ENCODE measurements at regions of chr9 and their contacts with region 1.

Region 1: DNA sequence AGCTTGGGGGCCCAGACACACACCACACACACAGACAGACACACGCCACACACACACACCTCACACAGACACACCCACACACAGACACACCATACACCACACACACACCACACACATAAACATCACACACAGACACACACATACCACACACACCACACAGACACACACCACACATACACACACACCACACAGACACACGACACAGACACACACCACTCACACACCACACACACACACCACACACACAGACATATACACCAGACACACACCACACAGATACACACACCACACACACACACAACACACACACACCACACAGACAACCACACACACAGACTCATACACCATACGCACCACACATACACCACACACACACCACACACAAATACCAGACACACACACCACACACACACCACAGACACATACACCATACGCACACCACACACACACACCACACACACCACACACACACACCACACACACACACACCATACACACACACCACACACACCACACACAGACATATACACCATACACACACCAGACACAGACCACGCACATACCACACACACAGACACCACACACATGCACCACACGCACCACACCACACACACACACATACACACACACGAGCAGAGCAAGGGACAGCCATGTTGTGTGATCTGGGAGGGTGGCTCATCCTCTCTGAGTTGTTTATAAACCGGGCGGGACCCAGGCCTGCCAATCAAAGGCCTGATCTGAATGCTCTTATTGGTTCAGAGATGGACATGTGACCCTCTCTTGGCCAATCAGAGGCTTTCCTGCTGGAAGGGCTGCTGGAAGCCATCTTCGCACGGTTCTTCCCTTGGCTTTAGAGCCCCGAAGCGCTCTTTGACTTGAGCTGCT is 148.3 kb downstream of the GAPVD1 start:
- DNase-seq: no peak
- ATAC-seq: peak in 1 of 4 donors; percentile 31
- H3K4me3 ChIP-seq: no peak overlapping the region
- H3K27ac ChIP-seq: no peak overlapping the region
- H3K4me1 ChIP-seq: peaks cover 0 to 11% (median 0%) of the 10 kb centered on the region in 4 donors
- H3K27me3 ChIP-seq: no peaks in the 10 kb centered on the region
- CTCF ChIP-seq: no peak
- POLR2A ChIP-seq: no peak

Region 2: DNA sequence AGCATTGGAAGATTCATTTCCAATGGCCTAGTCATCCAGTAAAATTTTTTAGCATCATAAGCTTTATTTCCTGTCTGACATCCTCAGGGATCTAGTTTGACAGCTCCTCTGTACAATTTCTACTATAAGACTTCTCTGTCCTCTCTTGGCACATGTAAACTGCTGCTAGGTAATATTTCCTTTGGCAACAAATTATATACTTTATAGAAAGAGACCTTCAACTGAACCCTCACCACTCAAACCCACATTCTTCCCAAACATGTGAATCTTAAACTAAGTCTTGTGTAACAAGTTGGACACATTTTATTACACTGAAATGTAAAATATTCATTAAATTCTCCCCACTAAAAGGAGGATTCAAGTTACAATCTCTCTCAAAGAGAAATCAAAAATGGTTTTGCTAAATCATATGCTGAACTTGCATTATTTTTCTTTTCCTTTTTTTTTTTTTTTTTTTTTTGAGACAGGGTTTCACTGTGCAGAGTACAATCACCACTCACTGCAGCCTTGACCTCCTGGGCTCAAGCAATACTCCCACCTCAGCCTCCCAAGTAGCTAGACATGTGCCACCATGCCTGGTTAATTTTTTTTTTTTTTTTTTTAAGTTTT is 303.5 kb before region 1 on chr9:
- intact Hi-C with region 1: no loop called
- DNase-seq: no peak
- ATAC-seq: no peak
- H3K4me3 ChIP-seq: no peak overlapping the region
- H3K27ac ChIP-seq: no peak overlapping the region
- H3K4me1 ChIP-seq: no peaks in the 10 kb centered on the region
- H3K27me3 ChIP-seq: no peaks in the 10 kb centered on the region
- CTCF ChIP-seq: no peak
- POLR2A ChIP-seq: no peak

Region 3: GRCh38 chr9:126232461-126232860 is 822.6 kb after region 1 on chr9:
- intact Hi-C with region 1: loop called in 1 of 2 experiments (anchors 5 kb)
- DNase-seq: no peak
- ATAC-seq: no peak
- H3K4me3 ChIP-seq: no peak overlapping the region
- H3K27ac ChIP-seq: no peak overlapping the region
- H3K4me1 ChIP-seq: no peaks in the 10 kb centered on the region
- H3K27me3 ChIP-seq: no peaks in the 10 kb centered on the region
- CTCF ChIP-seq: no peak
- POLR2A ChIP-seq: no peak